Cardiac septum (tissue), 1 donor: ENCODE measurements at regions of chr1 and their contacts with region 1.

Region 1: GRCh38 chr1:185681034-185681633 is 53.1 kb upstream of the HMCN1 start:
- DNase-seq: no peak

Region 2: DNA sequence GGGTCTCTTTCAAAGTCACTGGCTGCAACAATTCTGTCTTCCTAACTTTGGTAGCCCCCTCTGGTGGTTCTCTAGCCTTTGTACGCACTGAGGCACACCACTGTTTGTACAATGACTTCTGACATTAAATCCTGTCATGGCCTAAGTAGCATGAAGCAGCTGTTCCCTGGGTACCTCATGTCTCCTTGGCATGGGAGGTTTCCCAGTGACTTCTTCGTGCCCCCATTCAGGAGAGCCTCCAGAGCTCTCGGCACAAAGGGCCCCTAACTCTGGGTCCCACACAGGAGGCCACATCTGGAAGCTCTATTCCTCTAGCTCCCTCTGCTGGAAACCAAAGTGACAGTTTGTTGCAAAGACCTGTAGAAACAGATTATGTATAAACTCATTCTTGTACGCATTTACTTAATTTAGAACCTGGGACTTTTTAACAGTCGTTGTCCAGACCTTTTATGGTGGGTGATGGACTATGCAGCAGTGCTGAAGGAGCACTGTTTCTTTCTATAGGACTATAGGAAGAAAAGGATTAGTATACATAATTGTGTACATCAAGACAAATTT is 510.8 kb before region 1 on chr1:
- intact Hi-C with region 1: loop called (anchors 2 kb)
- DNase-seq: no peak

Region 3: DNA sequence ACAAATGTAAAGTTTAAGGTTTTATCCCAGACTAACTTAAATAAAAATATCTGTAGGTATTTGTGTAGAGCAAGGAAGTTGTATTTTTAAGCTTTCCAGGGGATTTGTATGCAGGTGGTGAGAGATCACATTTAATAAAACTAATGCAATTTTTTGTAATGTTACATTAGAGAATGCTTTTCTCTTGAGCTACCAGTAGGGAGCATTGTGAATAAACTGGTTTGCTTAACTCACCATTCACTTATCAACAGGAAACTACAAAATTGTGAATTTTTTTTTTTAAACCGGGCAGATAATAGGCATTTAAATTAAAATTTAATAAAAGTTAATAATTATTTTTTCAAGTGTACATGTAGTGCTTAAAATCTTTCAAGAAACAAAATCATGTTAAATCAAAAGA is 442.7 kb before region 1 on chr1:
- intact Hi-C with region 1: loop called (anchors 5 kb)
- DNase-seq: no peak

Region 4: GRCh38 chr1:185585770-185586169 is 95.4 kb before region 1 on chr1:
- intact Hi-C with region 1: no loop called
- DNase-seq: no peak

Region 5: GRCh38 chr1:185733818-185734771 is 53.0 kb after region 1 on chr1 and contains the start of gene HMCN1:
- intact Hi-C with region 1: no loop called
- DNase-seq: peak; percentile 85
- total RNA-seq, gene HMCN1: 7.3 TPM